Dendritic cell treated with granulocyte-macrophage colony-stimulating factor and Interleukin-4, amounts not matched to agents 40 ng/mL and 50 ng/mL, for 4 days (primary cell): ENCODE measurements at regions of chr12 and their contacts with region 1.

Region 1: DNA sequence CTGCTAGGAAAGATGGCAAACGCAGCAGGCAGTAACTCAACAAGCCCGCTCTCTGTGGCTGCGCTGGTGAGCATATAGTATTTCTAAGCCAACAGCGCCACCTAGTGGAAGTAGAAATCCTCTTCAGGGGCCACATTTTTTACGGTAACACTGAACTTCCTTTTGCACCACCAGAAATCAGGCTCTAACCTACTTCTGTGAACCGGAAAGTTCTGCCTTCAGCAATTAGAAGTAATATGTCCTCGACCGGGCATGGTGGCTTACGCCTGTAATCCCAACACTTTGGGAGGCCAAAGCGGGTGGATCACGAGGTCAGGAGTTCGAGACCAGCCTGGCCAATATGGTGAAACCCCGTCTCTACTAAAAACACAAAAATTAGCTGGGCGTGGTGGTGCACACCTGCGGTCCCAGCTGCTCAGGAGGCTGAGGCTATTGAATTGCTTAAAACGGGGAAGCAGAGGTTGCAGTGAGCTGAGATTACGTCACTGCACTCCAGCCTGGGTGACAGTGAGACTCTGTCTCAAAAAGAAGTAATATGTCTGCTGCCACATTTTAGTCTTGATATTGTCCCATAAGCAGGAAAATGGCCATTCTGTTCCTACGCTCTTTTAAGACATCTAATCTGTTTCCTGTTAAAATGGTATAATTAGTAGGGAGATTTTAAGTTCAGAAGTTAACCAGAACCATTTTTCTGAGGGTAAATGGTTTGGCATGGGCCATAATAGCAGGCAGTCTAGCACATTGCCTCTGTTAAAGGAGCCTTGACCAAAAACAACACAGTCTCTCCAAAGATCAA is 26.8 kb downstream of the APOBEC1 start:
- H3K4me3 Mint-ChIP-seq: peak overlapping the region; percentile 60
- H3K27ac Mint-ChIP-seq: peak overlapping the region; percentile 4
- H3K4me1 Mint-ChIP-seq: peaks cover 33% of the 10 kb centered on the region
- H3K27me3 Mint-ChIP-seq: peaks cover 8% of the 10 kb centered on the region

Region 2: GRCh38 chr12:7142056-7142644 is 496.8 kb before region 1 on chr12:
- intact Hi-C with region 1: loop called (anchors 1 kb)
- H3K4me3 Mint-ChIP-seq: no peak overlapping the region
- H3K27ac Mint-ChIP-seq: no peak overlapping the region
- H3K4me1 Mint-ChIP-seq: peaks cover 19% of the 10 kb centered on the region
- H3K27me3 Mint-ChIP-seq: peaks cover 2% of the 10 kb centered on the region

Region 3: DNA sequence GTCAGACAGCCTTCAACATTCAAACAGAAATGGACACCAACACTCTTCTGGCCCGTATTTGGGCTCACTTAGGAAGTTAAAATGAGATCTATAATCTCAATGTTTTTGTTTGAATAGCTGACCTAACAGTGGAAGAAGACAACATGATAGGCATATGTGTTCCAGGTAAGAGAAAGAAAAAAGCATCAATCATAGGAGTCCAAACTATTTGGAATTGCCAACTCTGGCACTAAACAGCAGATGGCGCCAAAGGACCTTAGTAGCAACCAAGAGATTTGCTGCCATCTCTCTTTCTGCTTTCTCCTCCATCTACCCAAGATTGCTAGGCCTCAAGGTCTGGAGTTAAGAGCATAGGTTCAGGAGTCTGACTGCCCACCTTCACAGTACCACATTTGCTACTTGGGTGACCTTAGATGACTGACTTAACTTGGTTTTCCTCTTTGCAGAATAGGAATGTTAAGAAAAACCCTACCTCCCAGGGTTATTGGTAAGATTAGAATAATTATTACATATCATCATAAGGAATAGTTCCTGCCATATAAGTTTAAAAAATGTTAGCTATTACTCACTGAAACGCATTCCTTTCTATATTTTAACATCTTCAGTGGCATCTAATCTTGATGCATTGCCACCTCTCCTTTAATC is 419.2 kb before region 1 on chr12:
- intact Hi-C with region 1: loop called (anchors 1 kb)
- H3K4me3 Mint-ChIP-seq: no peak overlapping the region
- H3K27ac Mint-ChIP-seq: no peak overlapping the region
- H3K4me1 Mint-ChIP-seq: no peaks in the 10 kb centered on the region
- H3K27me3 Mint-ChIP-seq: peaks cover 4% of the 10 kb centered on the region

Region 4: DNA sequence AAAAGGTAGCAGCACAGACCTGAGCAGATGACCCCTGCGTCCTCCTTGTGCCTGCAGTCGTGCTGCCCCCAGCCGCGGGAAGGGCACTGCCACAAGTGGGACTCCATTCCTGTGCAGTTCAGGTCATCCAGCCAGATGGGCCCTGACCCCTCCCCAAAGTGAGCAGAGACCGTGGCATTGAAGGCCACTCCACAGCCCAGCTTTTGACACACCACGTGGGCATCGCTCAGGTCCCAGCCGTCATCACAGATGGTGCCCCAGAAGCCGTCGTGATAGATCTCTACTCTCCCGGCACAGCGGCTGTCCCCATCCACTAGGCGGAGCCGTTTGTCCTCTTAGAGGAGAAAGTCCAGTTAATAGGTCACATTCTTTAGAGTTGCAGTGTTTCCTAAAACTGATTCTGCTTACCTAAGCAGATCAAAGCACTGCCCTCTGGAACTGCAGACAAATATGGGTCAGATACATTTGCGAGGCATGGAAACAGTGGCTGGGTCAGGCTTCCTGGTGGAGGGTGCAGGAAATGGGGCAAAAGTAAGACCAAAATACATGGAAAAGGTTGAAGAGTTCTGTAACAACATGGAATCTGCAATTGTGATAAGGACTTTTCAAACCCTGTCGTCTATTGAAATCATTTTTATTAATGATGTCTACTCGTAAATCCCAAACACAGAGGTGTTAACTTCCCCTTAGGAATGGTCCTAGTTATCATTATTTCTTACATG is 264.4 kb before region 1 on chr12:
- intact Hi-C with region 1: loop called (anchors 1 kb)
- H3K4me3 Mint-ChIP-seq: no peak overlapping the region
- H3K27ac Mint-ChIP-seq: no peak overlapping the region
- H3K4me1 Mint-ChIP-seq: peaks cover 6% of the 10 kb centered on the region
- H3K27me3 Mint-ChIP-seq: peaks cover 12% of the 10 kb centered on the region

Region 5: GRCh38 chr12:7460375-7461259 is 178.3 kb before region 1 on chr12:
- intact Hi-C with region 1: loop called (anchors 2 kb)
- H3K4me3 Mint-ChIP-seq: no peak overlapping the region
- H3K27ac Mint-ChIP-seq: no peak overlapping the region
- H3K4me1 Mint-ChIP-seq: peaks cover 14% of the 10 kb centered on the region
- H3K27me3 Mint-ChIP-seq: peaks cover 2% of the 10 kb centered on the region

Region 6: GRCh38 chr12:7583571-7583970 is 55.4 kb before region 1 on chr12:
- intact Hi-C with region 1: loop called (anchors 1 kb)
- H3K4me3 Mint-ChIP-seq: no peak overlapping the region
- H3K27ac Mint-ChIP-seq: no peak overlapping the region
- H3K4me1 Mint-ChIP-seq: peaks cover 33% of the 10 kb centered on the region
- H3K27me3 Mint-ChIP-seq: peaks cover 2% of the 10 kb centered on the region